A549 (cell line): ENCODE measurements at regions of chr14 and their contacts with region 1.

Region 1: GRCh38 chr14:52299692-52300278 is 14.3 kb upstream of the PTGER2 start:
- DNase-seq: peak; percentile 47 to 54
- ATAC-seq: peak in 1 of 2 experiments; percentile 46; a peak in 2 of 6 replicates
- H3K4me3 ChIP-seq: no peak overlapping the region
- H3K27ac ChIP-seq: no peak overlapping the region
- H3K4me1 ChIP-seq: no peaks in the 10 kb centered on the region
- CTCF ChIP-seq: peak; percentile 88
- EP300 ChIP-seq: no peak
- POLR2A ChIP-seq: no peak
- RAD21 ChIP-seq: peak; percentile 91 to 95

Region 2: GRCh38 chr14:52286661-52287649 is 12.8 kb before region 1 on chr14:
- CTCF ChIA-PET with region 1: interaction called, 10 read pairs
- POLR2A ChIA-PET with region 1: no interaction called
- DNase-seq: no peak
- ATAC-seq: no peak
- H3K4me3 ChIP-seq: no peak overlapping the region
- H3K27ac ChIP-seq: no peak overlapping the region
- H3K4me1 ChIP-seq: no peaks in the 10 kb centered on the region
- CTCF ChIP-seq: no peak
- EP300 ChIP-seq: no peak
- POLR2A ChIP-seq: no peak
- RAD21 ChIP-seq: no peak

Region 3: GRCh38 chr14:52312931-52313355 is 13.2 kb after region 1 on chr14:
- CTCF ChIA-PET with region 1: interaction called, 17 read pairs
- POLR2A ChIA-PET with region 1: no interaction called
- DNase-seq: no peak
- ATAC-seq: no peak
- H3K4me3 ChIP-seq: no peak overlapping the region
- H3K27ac ChIP-seq: no peak overlapping the region
- H3K4me1 ChIP-seq: no peaks in the 10 kb centered on the region
- CTCF ChIP-seq: no peak
- EP300 ChIP-seq: no peak
- POLR2A ChIP-seq: no peak
- RAD21 ChIP-seq: no peak

Region 4: DNA sequence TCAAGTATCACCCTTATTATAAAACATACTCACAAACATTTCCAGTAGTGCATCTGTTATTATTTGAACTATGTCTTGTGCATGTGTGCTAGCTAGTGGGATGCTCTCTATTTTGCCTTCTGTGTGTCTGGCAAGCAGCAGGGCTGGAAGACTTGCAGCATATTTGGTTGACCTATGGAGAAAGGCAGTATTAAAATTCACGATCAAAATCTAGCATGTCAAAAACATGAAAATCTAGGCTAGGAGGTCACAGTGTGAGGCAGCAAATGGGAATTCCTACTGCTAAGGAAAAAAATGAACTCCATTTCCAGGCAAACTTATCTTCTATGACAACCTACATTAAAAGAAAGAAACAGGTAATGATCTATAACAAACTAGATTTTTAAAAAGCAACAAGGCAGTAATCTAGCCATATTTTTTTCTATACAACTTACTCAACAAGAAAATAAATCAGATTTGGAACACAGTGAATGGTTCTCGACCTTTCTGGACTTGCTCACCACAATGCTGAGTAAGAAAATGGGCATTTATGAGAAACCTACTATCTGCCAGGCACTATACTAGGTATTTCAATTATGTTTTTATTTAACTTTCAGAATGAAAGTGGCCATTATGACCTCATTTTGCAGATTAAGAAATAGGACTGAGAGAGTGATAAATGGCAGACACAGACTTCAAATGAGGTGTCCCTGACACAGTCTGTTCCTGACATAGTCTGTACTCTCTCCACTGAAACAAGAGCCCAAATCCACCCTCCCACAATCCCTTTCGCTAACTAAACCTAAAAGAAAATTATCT is 155.7 kb after region 1 on chr14:
- CTCF ChIA-PET with region 1: interaction called, 22 read pairs
- POLR2A ChIA-PET with region 1: no interaction called
- DNase-seq: no peak
- ATAC-seq: no peak
- H3K4me3 ChIP-seq: no peak overlapping the region
- H3K27ac ChIP-seq: peak overlapping the region; percentile 27 to 59; a peak in 4 of 6 replicates
- H3K4me1 ChIP-seq: peaks cover 31% of the 10 kb centered on the region
- CTCF ChIP-seq: no peak
- EP300 ChIP-seq: no peak
- POLR2A ChIP-seq: no peak
- RAD21 ChIP-seq: no peak

Region 5: GRCh38 chr14:52473557-52473956 is 173.8 kb after region 1 on chr14:
- CTCF ChIA-PET with region 1: interaction called, 24 read pairs
- POLR2A ChIA-PET with region 1: no interaction called
- DNase-seq: peak in 1 of 2 experiments; percentile 56
- ATAC-seq: peak in 1 of 2 experiments; percentile 54; a peak in 1 of 6 replicates
- H3K4me3 ChIP-seq: no peak overlapping the region
- H3K27ac ChIP-seq: no peak overlapping the region
- H3K4me1 ChIP-seq: no peaks in the 10 kb centered on the region
- CTCF ChIP-seq: peak; percentile 67
- EP300 ChIP-seq: no peak
- POLR2A ChIP-seq: no peak
- RAD21 ChIP-seq: peak; percentile 73 to 87